MCF 10A (cell line): ENCODE measurements at regions of chr16 and their contacts with region 1.

Region 1: DNA sequence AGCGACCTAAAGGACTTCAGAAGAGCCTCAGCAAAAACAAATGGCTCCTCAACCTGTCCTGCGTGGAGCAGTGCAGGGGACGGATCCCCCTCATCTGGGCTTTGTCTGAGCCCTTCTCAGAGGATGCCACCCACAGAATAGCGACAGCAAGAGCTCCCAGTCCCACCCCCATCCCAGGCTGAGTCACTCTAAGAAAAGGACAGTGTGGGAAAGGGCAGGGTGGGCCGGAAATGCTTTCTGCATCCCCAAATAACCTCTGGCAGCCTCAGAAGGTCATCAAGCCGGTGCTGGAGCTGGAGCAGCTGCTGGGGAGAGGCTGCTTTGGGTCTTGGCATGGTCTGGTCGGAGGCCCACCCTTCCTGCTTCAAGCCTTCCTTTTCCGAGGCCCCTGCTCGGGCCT is 8.9 kb downstream of the SLC12A4 start:
- DNase-seq: peak; percentile 67
- H3K4me3 Mint-ChIP-seq: no peak overlapping the region
- H3K27ac Mint-ChIP-seq: no peak overlapping the region
- H3K4me1 Mint-ChIP-seq: peaks cover 41% of the 10 kb centered on the region
- H3K27me3 Mint-ChIP-seq: no peaks in the 10 kb centered on the region
- CTCF ChIP-seq: no peak

Region 2: GRCh38 chr16:67872786-67873537 is 86.6 kb before region 1 on chr16 and contains the start of gene EDC4:
- CTCF ChIA-PET with region 1: no interaction called
- POLR2A ChIA-PET with region 1: no interaction called
- intact Hi-C with region 1: no loop called
- DNase-seq: peak; percentile 71
- H3K4me3 Mint-ChIP-seq: peak within 1 kb of the TSS; percentile 89
- H3K27ac Mint-ChIP-seq: peak within 1 kb of the TSS; percentile 94
- H3K4me1 Mint-ChIP-seq: peaks cover 34% of the 10 kb centered on the region
- H3K27me3 Mint-ChIP-seq: no peaks in the 10 kb centered on the region
- CTCF ChIP-seq: no peak
- total RNA-seq, gene EDC4: 50.9 and 51.3 TPM in 2 replicates

Region 3: GRCh38 chr16:67942200-67942509 is 17.4 kb before region 1 on chr16:
- CTCF ChIA-PET with region 1: interaction called, 5 read pairs
- POLR2A ChIA-PET with region 1: interaction called, 45 read pairs
- intact Hi-C with region 1: no loop called
- DNase-seq: peak; percentile 52
- H3K4me3 Mint-ChIP-seq: no peak overlapping the region
- H3K27ac Mint-ChIP-seq: no peak overlapping the region
- H3K4me1 Mint-ChIP-seq: peaks cover 9% of the 10 kb centered on the region
- H3K27me3 Mint-ChIP-seq: no peaks in the 10 kb centered on the region
- CTCF ChIP-seq: peak; percentile 59